Common myeloid progenitor, CD34-positive (primary cell): ENCODE measurements at regions of chr11 and their contacts with region 1.

Region 1: GRCh38 chr11:34585735-34586487 is 35.0 kb upstream of the EHF start:
- DNase-seq: peak; percentile 67 to 83 (median 81)
- H3K4me3 ChIP-seq: peak overlapping the region in 4 of 7 experiments; percentile 37 to 62 (median 45)
- H3K27ac ChIP-seq: peak overlapping the region in 1 of 2 experiments; percentile 73
- H3K4me1 ChIP-seq: peaks cover 4 to 11% (median 8%) of the 10 kb centered on the region in 4 experiments
- H3K27me3 ChIP-seq: no peaks in the 10 kb centered on the region

Region 2: DNA sequence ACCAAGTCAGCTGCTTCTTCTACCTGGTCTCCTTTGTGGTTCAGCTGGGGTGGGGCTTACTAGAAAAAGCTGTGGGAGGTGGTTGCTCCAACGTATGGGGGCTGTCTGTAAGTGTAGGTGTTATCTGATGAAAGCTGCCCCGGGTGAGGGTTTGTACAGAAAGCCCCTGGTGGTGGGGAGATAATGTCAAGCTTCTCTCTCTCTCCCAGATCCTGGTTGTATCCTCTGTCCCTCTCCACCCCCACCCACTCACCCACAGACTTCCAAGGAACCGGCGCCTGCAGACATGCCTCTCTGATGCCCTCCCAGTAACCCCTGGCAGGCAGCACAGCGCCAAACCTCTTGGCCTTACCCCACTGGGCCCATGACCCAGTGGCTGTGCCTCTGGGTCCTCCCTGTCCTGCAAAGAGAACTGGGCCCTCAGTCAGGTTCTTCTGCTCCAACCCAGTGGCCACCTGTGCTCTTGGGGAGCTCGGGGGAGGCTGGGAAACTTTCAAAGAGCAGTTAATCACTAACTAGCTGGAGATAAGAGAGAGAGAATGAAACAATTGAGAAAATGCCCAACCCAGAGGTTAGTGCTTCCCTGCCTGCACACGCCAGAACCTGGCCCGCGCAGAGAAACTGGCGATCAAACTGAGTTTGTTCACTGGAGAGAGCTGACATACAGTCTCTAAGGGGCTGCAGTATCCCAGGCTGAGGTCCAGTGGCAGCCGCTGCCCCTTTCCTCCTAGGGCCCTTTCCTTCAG is 14.6 kb after region 1 on chr11:
- CTCF ChIA-PET with region 1: interaction called, 13 read pairs
- POLR2A ChIA-PET with region 1: interaction called, 3 read pairs
- DNase-seq: no peak
- H3K4me3 ChIP-seq: no peak overlapping the region
- H3K27ac ChIP-seq: peak overlapping the region in 1 of 2 experiments; percentile 68
- H3K4me1 ChIP-seq: peaks cover 0 to 19% (median 8%) of the 10 kb centered on the region in 4 experiments
- H3K27me3 ChIP-seq: no peaks in the 10 kb centered on the region

Region 3: GRCh38 chr11:34890812-34891211 is 304.9 kb after region 1 on chr11:
- CTCF ChIA-PET with region 1: interaction called, 85 read pairs
- POLR2A ChIA-PET with region 1: interaction called, 3 read pairs
- DNase-seq: peak; percentile 59 to 75 (median 74)
- H3K4me3 ChIP-seq: no peak overlapping the region
- H3K27ac ChIP-seq: no peak overlapping the region
- H3K4me1 ChIP-seq: no peaks in the 10 kb centered on the region
- H3K27me3 ChIP-seq: no peaks in the 10 kb centered on the region